CD8-positive, alpha-beta T cell (primary cell): ENCODE measurements at regions of chr1 and their contacts with region 1.

Region 1: GRCh38 chr1:193019442-193020026 is 39.6 kb downstream of the UCHL5 start:
- DNase-seq: peak in 2 of 9 experiments; percentile 53 to 63
- ATAC-seq: peak; percentile 57
- H3K4me3 ChIP-seq: no peak overlapping the region
- H3K4me3 Mint-ChIP-seq: no peak overlapping the region
- H3K27ac ChIP-seq: no peak overlapping the region
- H3K27ac Mint-ChIP-seq: no peak overlapping the region
- H3K4me1 ChIP-seq: no peaks in the 10 kb centered on the region
- H3K4me1 Mint-ChIP-seq: no peaks in the 10 kb centered on the region
- H3K27me3 ChIP-seq: no peaks in the 10 kb centered on the region
- H3K27me3 Mint-ChIP-seq: no peaks in the 10 kb centered on the region
- CTCF ChIP-seq: peak; percentile 48

Region 2: DNA sequence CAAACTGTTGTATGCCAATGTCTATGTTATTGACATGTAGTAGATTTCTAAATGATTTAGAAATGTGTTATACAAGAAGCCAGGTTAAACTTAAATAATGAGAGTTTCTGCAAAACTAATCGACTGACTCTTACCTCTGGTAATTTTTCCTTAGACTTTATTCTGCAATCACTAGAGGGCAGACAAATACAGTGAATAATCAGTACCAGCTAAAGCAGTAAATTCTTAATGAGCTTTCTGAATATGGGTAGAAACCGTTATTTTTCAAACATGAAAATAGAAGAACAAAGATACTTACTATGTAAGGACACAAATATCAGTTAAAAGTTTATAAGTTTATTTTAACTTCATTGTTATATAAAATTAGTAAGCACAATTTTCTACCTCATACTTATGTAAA is 541.9 kb before region 1 on chr1:
- CTCF ChIA-PET with region 1: interaction called, 6 read pairs
- POLR2A ChIA-PET with region 1: no interaction called
- intact Hi-C with region 1: loop called (anchors 1 to 2 kb)
- DNase-seq: peak in 2 of 9 experiments; percentile 52 to 65
- ATAC-seq: peak; percentile 77
- H3K4me3 ChIP-seq: no peak overlapping the region
- H3K4me3 Mint-ChIP-seq: no peak overlapping the region
- H3K27ac ChIP-seq: no peak overlapping the region
- H3K27ac Mint-ChIP-seq: no peak overlapping the region
- H3K4me1 ChIP-seq: no peaks in the 10 kb centered on the region
- H3K4me1 Mint-ChIP-seq: no peaks in the 10 kb centered on the region
- H3K27me3 ChIP-seq: peaks cover 0 to 2% of the 10 kb centered on the region in 2 experiments
- H3K27me3 Mint-ChIP-seq: no peaks in the 10 kb centered on the region
- CTCF ChIP-seq: peak; percentile 64

Region 3: DNA sequence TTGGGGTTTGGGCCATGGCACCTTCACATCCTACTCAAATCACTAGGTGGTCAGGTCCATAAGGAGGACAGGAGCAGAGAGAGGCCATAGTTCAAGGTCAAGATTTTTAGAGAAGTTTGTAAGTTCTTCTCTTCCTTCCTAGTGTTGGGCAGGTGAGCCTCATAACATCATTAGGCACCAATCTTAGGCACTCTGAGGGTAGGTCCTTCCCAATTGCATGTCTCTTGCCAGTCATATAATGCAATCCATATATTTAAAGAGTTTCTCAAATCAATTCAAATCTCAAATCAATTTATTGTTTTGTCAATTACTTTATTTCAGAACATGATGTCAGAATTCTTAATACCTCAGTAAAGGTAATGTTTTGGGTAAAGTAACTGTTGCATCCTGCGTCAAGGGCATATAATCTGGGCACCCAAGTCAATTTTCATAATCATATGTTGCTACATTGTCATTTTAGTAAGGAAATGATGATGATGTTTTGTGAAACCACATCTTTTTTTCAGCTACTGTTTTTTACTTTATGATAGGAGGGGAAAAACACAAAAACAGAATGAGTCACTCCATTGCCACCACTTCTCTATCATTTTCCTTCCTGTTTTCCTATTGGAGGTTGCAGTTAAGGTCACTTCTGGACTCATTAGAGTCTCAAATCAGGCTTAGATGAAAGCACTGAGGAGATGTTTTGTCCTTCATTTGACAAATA is 83.1 kb before region 1 on chr1:
- CTCF ChIA-PET with region 1: no interaction called
- POLR2A ChIA-PET with region 1: no interaction called
- intact Hi-C with region 1: loop called in 1 of 2 experiments (anchors 5 kb)
- DNase-seq: peak in 2 of 9 experiments; percentile 24 to 45
- ATAC-seq: peak; percentile 61
- H3K4me3 ChIP-seq: no peak overlapping the region
- H3K4me3 Mint-ChIP-seq: no peak overlapping the region
- H3K27ac ChIP-seq: no peak overlapping the region
- H3K27ac Mint-ChIP-seq: peak overlapping the region; percentile 46
- H3K4me1 ChIP-seq: no peaks in the 10 kb centered on the region
- H3K4me1 Mint-ChIP-seq: peaks cover 6% of the 10 kb centered on the region
- H3K27me3 ChIP-seq: no peaks in the 10 kb centered on the region
- H3K27me3 Mint-ChIP-seq: no peaks in the 10 kb centered on the region
- CTCF ChIP-seq: no peak

Region 4: GRCh38 chr1:192967901-192968300 is 51.6 kb before region 1 on chr1:
- CTCF ChIA-PET with region 1: no interaction called
- POLR2A ChIA-PET with region 1: no interaction called
- intact Hi-C with region 1: no loop called
- DNase-seq: no peak
- ATAC-seq: no peak
- H3K4me3 ChIP-seq: no peak overlapping the region
- H3K4me3 Mint-ChIP-seq: no peak overlapping the region
- H3K27ac ChIP-seq: no peak overlapping the region
- H3K27ac Mint-ChIP-seq: no peak overlapping the region
- H3K4me1 ChIP-seq: no peaks in the 10 kb centered on the region
- H3K4me1 Mint-ChIP-seq: peaks cover 5% of the 10 kb centered on the region
- H3K27me3 ChIP-seq: no peaks in the 10 kb centered on the region
- H3K27me3 Mint-ChIP-seq: no peaks in the 10 kb centered on the region
- CTCF ChIP-seq: no peak

Region 5: DNA sequence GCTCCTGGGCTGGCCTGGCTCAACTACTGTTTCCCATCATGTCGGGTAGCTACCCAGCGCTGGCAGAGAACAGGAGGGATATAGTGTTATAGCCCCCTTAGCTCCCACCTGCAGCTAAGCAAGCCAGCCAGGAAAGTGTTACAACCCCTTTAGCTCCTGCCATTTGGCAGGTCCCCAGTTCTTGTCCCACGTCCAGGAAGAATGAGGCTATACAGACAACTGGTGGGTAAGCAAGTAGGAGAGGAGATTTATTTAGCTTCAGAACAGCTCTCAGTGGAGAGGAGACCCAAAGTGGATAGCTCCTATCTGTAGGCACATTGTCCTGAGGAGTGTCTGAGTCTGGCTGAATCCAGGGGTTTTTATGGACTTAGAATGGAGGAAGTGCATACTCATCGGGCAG is 908.0 kb after region 1 on chr1:
- CTCF ChIA-PET with region 1: no interaction called
- POLR2A ChIA-PET with region 1: no interaction called
- intact Hi-C with region 1: no loop called
- DNase-seq: no peak
- ATAC-seq: no peak
- H3K4me3 ChIP-seq: no peak overlapping the region
- H3K4me3 Mint-ChIP-seq: no peak overlapping the region
- H3K27ac ChIP-seq: no peak overlapping the region
- H3K27ac Mint-ChIP-seq: no peak overlapping the region
- H3K4me1 ChIP-seq: no peaks in the 10 kb centered on the region
- H3K4me1 Mint-ChIP-seq: no peaks in the 10 kb centered on the region
- H3K27me3 ChIP-seq: no peaks in the 10 kb centered on the region
- H3K27me3 Mint-ChIP-seq: no peaks in the 10 kb centered on the region
- CTCF ChIP-seq: no peak

Region 6: GRCh38 chr1:194159940-194160339 is 1140.4 kb after region 1 on chr1:
- CTCF ChIA-PET with region 1: no interaction called
- POLR2A ChIA-PET with region 1: no interaction called
- intact Hi-C with region 1: no loop called
- DNase-seq: no peak
- ATAC-seq: no peak
- H3K4me3 ChIP-seq: no peak overlapping the region
- H3K4me3 Mint-ChIP-seq: no peak overlapping the region
- H3K27ac ChIP-seq: no peak overlapping the region
- H3K27ac Mint-ChIP-seq: no peak overlapping the region
- H3K4me1 ChIP-seq: no peaks in the 10 kb centered on the region
- H3K4me1 Mint-ChIP-seq: no peaks in the 10 kb centered on the region
- H3K27me3 ChIP-seq: no peaks in the 10 kb centered on the region
- H3K27me3 Mint-ChIP-seq: no peaks in the 10 kb centered on the region
- CTCF ChIP-seq: no peak